ENCODE measurements at regions of chr1 and their contacts with region 1.

Region 1: DNA sequence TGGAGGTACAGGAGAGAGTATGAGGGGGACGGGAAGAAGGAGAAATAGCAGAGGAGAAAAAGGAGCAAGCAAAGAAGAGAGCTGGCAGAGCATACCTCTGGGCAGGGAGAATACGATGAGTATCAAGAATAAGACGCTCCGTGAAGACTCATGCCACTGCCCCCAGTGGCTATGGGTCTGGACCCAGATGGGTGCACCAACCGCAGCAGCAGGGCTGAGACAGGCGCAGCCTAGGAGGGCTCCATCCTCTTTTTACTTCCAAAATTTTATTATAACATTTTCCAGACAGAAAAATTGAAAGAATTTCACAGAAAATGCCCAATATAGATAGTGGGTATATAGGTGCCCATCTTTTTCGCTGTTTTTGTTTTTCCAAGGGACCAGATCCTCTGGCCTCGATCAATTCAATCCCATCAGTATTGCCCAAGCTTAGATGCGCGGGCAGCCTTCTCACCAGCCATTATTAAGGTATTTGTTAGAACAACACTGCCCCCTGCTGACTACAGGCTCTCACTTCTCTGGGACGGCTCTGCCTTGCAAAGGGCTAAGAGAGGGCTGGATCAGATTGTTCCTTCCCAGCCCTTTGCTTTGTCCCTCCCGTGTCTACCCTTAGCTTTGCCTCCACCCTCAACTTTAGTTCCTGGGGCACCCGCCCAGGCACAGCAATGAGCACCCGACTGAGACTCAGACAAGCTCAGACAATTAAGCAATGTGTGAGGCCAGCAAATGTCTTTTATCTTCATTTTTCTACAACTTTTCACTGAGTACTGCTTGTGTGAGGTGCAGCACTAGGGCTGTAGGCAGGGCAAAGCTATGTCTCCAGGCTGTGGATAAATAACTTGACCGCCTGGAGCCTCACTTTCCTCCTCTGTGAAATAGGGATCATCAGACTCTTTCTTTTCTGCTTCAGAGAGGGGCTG is 17.5 kb upstream of the CAMK1G start:
- H3K4me3 ChIP-seq: no peak overlapping the region
- H3K27ac ChIP-seq: no peak overlapping the region
- H3K4me1 ChIP-seq: no peaks in the 10 kb centered on the region
- CTCF ChIP-seq: peak; percentile 65; the same call in 1 of the 2 replicates

Region 2: GRCh38 chr1:208962867-208963266 is 603.2 kb before region 1 on chr1:
- CTCF ChIA-PET with region 1: no interaction called
- POLR2A ChIA-PET with region 1: no interaction called
- H3K4me3 ChIP-seq: no peak overlapping the region
- H3K27ac ChIP-seq: no peak overlapping the region
- H3K4me1 ChIP-seq: no peaks in the 10 kb centered on the region
- CTCF ChIP-seq: no peak

Region 3: DNA sequence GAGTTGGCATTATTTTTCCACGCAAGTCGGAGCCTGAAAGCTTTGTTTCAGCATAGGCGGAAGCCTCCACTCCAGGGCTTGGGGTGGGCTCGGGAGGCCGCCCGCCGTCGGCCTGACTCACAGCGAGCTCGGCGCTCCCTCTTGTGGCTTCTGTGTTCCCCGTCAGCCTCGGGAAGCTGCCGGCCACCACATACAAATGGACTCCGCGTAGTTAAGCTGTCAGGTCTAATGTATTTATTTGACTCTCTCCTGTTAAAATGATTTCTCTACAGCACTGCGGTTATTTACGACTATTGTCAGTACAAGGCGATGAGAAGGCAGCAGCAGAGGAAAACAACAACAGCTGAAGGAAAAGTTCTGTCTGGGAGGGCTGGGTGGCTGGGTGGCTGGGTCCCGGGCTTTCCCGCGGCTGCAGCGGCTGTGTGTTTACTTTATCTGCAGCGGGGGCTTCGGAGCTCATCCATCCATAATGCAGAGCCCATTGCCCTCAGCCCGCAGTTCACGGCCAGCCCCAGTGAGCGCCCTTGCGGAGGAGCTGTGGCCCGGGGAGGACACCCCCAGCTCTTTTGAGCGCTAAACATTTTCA is 358.2 kb before region 1 on chr1:
- CTCF ChIA-PET with region 1: interaction called, 17 read pairs
- POLR2A ChIA-PET with region 1: no interaction called
- H3K4me3 ChIP-seq: peak overlapping the region; percentile 43
- H3K27ac ChIP-seq: no peak overlapping the region
- H3K4me1 ChIP-seq: no peaks in the 10 kb centered on the region
- CTCF ChIP-seq: peak; percentile 88

Region 4: DNA sequence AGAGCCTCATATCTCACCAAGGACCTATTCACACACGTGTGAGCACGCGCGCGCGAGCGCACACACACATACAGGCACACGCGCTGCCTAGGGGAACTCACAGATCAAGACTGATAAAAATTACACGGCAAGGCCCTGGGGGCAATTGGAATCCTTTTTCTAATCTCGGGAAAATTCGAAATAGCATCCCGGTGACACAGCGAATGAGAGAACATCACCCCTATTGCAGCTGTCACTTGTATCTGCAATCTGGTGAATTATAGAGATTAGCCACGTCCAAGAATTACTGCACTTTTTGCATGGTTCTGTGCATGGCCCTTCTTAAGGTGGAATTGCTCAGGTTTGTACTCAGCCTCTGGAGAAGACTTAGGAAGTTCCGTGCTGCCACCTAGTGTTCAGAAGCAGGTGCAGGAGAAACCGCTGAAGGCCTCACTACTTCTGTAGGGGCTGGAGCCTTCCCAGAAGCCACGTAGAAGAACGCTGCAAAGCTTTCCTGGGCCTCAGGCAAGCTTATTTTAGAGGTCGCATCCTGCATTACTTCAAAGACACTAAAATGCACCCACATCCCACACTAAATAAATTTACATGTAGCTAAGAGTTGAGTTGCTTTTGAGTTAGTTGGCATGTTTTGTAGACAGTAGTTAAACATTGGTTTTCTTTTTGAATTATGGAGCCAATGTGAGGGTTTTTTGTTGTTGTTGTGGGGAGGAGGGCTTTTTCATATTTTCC is 211.7 kb before region 1 on chr1:
- CTCF ChIA-PET with region 1: interaction called, 11 read pairs
- POLR2A ChIA-PET with region 1: no interaction called
- H3K4me3 ChIP-seq: no peak overlapping the region
- H3K27ac ChIP-seq: no peak overlapping the region
- H3K4me1 ChIP-seq: no peaks in the 10 kb centered on the region
- CTCF ChIP-seq: peak; percentile 73; the same call in 1 of the 2 replicates

Region 5: DNA sequence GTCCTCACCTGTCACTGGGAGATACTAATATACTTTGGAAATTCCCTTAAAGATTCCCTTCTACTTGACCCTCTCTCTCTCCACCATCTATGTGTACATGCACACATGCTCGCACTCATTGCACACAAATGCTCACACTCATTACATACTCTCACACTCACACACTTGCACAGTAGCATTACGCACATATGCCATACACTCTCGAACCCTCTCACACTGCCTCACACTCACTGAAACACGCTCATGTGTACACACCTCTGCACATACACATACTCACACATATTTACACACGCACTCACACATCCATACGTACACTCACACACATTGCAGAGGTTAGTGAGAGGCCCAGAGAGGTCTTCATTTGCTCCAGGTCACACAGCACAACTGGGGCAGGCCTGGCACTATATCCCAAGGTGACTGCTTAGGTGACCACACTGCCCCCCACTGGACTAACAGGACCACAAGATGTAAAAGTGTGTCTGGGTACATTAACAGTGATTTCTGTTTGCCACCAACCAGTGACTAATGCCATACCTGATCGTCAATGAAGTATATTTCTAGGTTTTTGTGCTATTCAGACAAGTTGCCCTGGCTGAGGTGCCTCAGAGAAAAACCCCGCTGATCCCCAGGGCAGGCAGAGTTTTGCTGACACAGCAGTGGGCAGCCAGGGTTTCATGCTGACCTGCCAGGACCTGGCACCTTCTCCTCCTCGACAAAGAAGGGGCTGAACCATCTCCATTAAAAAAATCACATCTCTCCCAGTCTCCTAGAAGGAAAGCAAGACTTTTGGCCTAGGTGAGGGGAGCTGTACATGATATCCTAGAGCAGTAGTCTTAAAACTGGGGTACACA is 11.0 kb before region 1 on chr1:
- CTCF ChIA-PET with region 1: interaction called, 10 read pairs
- POLR2A ChIA-PET with region 1: no interaction called
- H3K4me3 ChIP-seq: no peak overlapping the region
- H3K27ac ChIP-seq: no peak overlapping the region
- H3K4me1 ChIP-seq: no peaks in the 10 kb centered on the region
- CTCF ChIP-seq: no peak

Region 6: DNA sequence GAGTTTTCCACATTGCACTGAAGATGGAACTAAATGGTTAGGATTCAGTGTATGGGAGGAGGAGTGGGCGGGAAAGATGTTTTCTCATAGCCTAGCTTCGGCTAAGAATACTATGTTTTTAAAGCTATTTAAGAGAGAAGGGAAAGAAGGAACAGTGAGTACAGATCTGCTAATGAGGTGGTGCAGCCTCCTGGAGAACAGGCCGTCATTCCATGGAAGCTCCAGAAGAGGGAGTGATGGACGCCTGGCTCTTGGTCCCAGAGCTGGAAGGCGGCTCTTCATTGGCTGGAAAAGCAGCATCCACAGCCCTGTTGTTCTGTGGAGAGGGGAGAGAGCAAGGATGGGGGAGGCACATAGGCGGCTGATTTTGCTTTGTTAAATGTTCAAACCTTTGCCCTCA is 24.4 kb after region 1 on chr1:
- CTCF ChIA-PET with region 1: interaction called, 10 read pairs
- POLR2A ChIA-PET with region 1: no interaction called
- H3K4me3 ChIP-seq: no peak overlapping the region
- H3K27ac ChIP-seq: no peak overlapping the region
- H3K4me1 ChIP-seq: no peaks in the 10 kb centered on the region
- CTCF ChIP-seq: no peak

Region 7: DNA sequence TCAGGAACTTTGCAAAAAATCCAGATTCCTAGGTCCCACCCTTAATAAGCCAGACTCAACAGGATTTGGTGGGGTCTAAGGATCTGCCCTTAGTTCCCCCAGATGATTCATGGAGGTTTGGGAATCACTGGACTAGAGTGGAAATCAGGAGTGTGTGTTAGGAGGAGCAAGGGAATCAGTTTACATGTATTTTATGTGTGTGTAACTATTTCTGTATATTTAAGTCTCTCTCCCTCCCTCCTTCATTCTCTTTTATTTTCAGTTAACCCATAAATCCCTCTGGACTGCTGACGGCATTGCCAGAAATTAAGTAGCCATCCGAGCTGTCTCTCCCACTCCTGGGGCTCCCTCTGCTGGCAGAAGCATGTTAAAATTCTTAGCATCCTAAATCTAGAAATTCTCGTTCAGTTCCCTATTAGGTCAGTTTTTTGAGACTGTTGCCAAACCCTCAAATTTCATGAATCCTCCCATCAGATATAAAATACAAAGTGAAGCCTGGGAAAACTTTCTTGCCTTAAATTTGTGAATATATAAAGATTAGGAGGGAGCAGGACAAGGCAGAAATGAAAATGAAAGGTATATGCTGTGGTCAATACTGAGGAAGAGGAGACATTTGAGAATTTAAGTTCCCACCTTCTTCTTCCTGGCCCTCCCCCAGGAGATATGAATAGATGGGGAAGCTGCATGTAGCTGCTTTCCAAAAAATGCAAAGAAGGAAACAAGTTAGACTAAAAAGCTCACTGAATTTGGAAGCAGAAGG is 126.9 kb after region 1 on chr1:
- CTCF ChIA-PET with region 1: interaction called, 18 read pairs
- POLR2A ChIA-PET with region 1: no interaction called
- H3K4me3 ChIP-seq: no peak overlapping the region
- H3K27ac ChIP-seq: no peak overlapping the region
- H3K4me1 ChIP-seq: no peaks in the 10 kb centered on the region
- CTCF ChIP-seq: peak; percentile 55; the same call in 1 of the 2 replicates

Measured in HEK293 (cell line).